ENCODE measurements at regions of chr19 and their contacts with region 1.

Region 1: GRCh38 chr19:30682999-30683536 is 310.9 kb downstream of the ZNF536 start:
- DNase-seq: peak; percentile 72 to 74
- ATAC-seq: peak in 7 of 8 donors; percentile 63 to 90 (median 81)
- H3K4me3 ChIP-seq: no peak overlapping the region
- H3K27ac ChIP-seq: no peak overlapping the region
- H3K4me1 ChIP-seq: peaks cover 0 to 14% (median 0%) of the 10 kb centered on the region in 9 donors
- H3K27me3 ChIP-seq: peaks cover 4 to 37% (median 20%) of the 10 kb centered on the region in 7 donors
- CTCF ChIP-seq: peak; percentile 85 to 95 (median 91)

Region 2: DNA sequence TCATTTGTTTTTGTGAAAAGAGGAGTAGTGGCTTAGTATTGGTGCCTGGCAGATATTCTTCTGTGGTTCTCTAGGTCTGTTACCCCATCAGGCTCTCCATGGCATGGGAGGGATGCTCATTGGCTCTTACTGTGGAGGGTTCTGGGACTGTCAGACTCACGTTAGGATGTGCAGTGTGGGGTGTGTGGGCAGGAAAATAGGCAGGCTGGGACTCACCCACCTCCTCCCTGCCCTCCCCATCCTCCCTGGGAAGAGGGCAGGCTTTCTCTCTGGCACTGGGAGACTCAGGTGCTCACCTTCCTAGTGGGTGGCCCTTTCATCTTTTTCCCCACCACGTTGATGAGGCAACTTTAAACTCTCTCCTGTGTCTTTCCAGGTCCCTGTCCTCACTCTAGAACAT is 266.7 kb before region 1 on chr19:
- intact Hi-C with region 1: no loop called
- DNase-seq: no peak
- ATAC-seq: no peak
- H3K4me3 ChIP-seq: no peak overlapping the region
- H3K27ac ChIP-seq: no peak overlapping the region
- H3K4me1 ChIP-seq: no peaks in the 10 kb centered on the region
- H3K27me3 ChIP-seq: peaks cover 0 to 28% (median 18%) of the 10 kb centered on the region in 7 donors
- CTCF ChIP-seq: no peak

Region 3: DNA sequence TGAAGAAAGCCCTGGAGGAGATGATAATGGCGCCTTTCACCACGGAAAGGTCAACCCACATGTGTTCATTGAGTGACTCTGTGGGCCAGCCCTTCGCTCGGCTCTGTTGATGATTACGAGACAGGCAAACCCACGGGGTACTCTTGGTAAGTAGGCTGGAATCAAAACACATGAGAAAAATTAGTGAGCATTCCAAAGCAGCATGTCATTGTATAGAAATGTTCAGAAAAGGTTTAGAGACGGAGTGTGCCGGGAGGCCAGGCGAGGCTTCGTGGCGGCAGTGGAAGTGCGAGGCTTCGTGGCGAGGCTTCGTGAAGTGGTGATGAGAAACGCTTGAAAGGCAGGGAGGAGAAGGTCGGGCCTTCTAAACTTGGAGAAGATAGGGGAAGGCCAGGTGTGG is 166.5 kb before region 1 on chr19:
- intact Hi-C with region 1: no loop called
- DNase-seq: no peak
- ATAC-seq: no peak
- H3K4me3 ChIP-seq: no peak overlapping the region
- H3K27ac ChIP-seq: no peak overlapping the region
- H3K4me1 ChIP-seq: peaks cover 0 to 9% (median 0%) of the 10 kb centered on the region in 9 donors
- H3K27me3 ChIP-seq: peaks cover 0 to 8% (median 0%) of the 10 kb centered on the region in 7 donors
- CTCF ChIP-seq: no peak

Region 4: GRCh38 chr19:30649934-30650614 is 33.0 kb before region 1 on chr19:
- intact Hi-C with region 1: no loop called
- DNase-seq: peak in 1 of 2 donors; percentile 33
- ATAC-seq: peak in 2 of 8 donors; percentile 29 to 54
- H3K4me3 ChIP-seq: no peak overlapping the region
- H3K27ac ChIP-seq: no peak overlapping the region
- H3K4me1 ChIP-seq: no peaks in the 10 kb centered on the region
- H3K27me3 ChIP-seq: peaks cover 0 to 88% (median 52%) of the 10 kb centered on the region in 7 donors
- CTCF ChIP-seq: peak in 8 of 9 donors; percentile 64 to 90 (median 76)

Region 5: GRCh38 chr19:30784850-30785457 is 101.9 kb after region 1 on chr19:
- intact Hi-C with region 1: no loop called
- DNase-seq: peak; percentile 35 to 39
- ATAC-seq: peak in 4 of 8 donors; percentile 37 to 66 (median 54)
- H3K4me3 ChIP-seq: no peak overlapping the region
- H3K27ac ChIP-seq: no peak overlapping the region
- H3K4me1 ChIP-seq: peaks cover 0 to 3% (median 0%) of the 10 kb centered on the region in 9 donors
- H3K27me3 ChIP-seq: peaks cover 0 to 14% (median 0%) of the 10 kb centered on the region in 7 donors
- CTCF ChIP-seq: peak; percentile 30 to 73 (median 56)

Region 6: GRCh38 chr19:30906871-30907270 is 223.8 kb after region 1 on chr19:
- intact Hi-C with region 1: loop called in 1 of 10 experiments (anchors 10 kb)
- DNase-seq: no peak
- ATAC-seq: no peak
- H3K4me3 ChIP-seq: no peak overlapping the region
- H3K27ac ChIP-seq: no peak overlapping the region
- H3K4me1 ChIP-seq: no peaks in the 10 kb centered on the region
- H3K27me3 ChIP-seq: peaks cover 0 to 5% (median 0%) of the 10 kb centered on the region in 7 donors
- CTCF ChIP-seq: no peak

Region 7: GRCh38 chr19:31350701-31351068 is 667.6 kb after region 1 on chr19:
- intact Hi-C with region 1: loop called in 4 of 10 experiments (anchors 5 to 10 kb)
- DNase-seq: peak; percentile 65 to 66
- ATAC-seq: peak; percentile 26 to 50 (median 44)
- H3K4me3 ChIP-seq: peak overlapping the region; percentile 77 to 100 (median 92)
- H3K27ac ChIP-seq: peak overlapping the region; percentile 78 to 98 (median 94)
- H3K4me1 ChIP-seq: peaks cover 6 to 53% (median 21%) of the 10 kb centered on the region in 9 donors
- H3K27me3 ChIP-seq: peaks cover 0 to 67% (median 40%) of the 10 kb centered on the region in 7 donors
- CTCF ChIP-seq: no peak

Region 8: DNA sequence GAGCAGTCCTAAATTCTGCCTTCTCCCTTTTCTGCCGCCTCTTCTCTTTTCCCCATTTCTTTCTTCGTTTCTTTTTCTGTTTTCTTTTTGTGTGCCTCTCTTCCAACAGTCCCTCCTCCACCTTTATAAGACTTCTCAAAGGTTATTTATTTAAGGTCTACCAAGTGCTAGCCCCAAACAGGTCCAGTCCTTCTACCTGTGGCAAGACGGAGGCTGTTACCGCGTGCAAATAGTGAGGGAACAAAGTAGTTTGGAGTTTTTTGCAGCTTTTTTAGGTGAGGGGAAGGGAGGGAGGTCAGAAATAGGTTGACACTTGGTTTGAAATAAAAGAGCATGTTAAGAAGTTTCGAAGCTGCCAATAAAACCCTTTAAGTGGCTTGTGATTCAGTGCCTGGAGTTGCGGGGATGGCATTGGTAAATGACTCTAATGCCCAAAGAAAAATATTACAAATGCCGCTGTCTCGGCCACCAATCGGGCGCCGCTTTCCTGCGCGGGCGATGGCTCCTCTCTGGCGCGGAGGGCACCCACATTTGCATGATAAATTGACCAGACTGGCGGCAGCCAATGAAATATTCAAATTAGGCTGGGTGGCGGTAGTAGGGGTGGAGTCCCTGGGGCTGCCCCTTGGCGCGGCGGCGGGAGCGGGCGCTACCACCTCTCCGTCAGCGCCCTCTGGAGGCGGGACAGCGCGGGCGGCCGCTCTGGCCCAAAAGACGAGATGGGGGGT is 673.7 kb after region 1 on chr19:
- intact Hi-C with region 1: loop called in 4 of 10 experiments (anchors 5 to 10 kb)
- DNase-seq: peak in 1 of 2 donors; percentile 51
- ATAC-seq: peak in 6 of 8 donors; percentile 9 to 61 (median 45)
- H3K4me3 ChIP-seq: peak overlapping the region in 2 of 10 donors; percentile 8 to 13
- H3K27ac ChIP-seq: no peak overlapping the region
- H3K4me1 ChIP-seq: peaks cover 3 to 42% (median 10%) of the 10 kb centered on the region in 9 donors
- H3K27me3 ChIP-seq: peaks cover 0 to 74% (median 62%) of the 10 kb centered on the region in 7 donors
- CTCF ChIP-seq: peak; percentile 24 to 68 (median 58)

Region 9: GRCh38 chr19:31548941-31549340 is 865.9 kb after region 1 on chr19:
- intact Hi-C with region 1: loop called in 4 of 10 experiments (anchors 5 to 10 kb)
- DNase-seq: peak in 1 of 2 donors; percentile 37
- ATAC-seq: peak in 1 of 8 donors; percentile 52
- H3K4me3 ChIP-seq: no peak overlapping the region
- H3K27ac ChIP-seq: no peak overlapping the region
- H3K4me1 ChIP-seq: no peaks in the 10 kb centered on the region
- H3K27me3 ChIP-seq: peaks cover 0 to 19% (median 0%) of the 10 kb centered on the region in 7 donors
- CTCF ChIP-seq: peak; percentile 20 to 63 (median 51)

Region 10: GRCh38 chr19:32041681-32042292 is 1358.7 kb after region 1 on chr19:
- intact Hi-C with region 1: loop called in 5 of 10 experiments (anchors 5 to 10 kb)
- DNase-seq: peak; percentile 27 to 57
- ATAC-seq: no peak
- H3K4me3 ChIP-seq: peak overlapping the region in 8 of 10 donors; percentile 16 to 47 (median 36)
- H3K27ac ChIP-seq: no peak overlapping the region
- H3K4me1 ChIP-seq: peaks cover 0 to 11% (median 0%) of the 10 kb centered on the region in 9 donors
- H3K27me3 ChIP-seq: peaks cover 0 to 59% (median 43%) of the 10 kb centered on the region in 7 donors
- CTCF ChIP-seq: peak; percentile 40 to 82 (median 72)